Sigmoid colon (tissue), 7 donors: ENCODE measurements at regions of chr12 and their contacts with region 1.

Region 1: GRCh38 chr12:56333679-56334489 is at the start of gene PAN2:
- DNase-seq: peak; percentile 99
- H3K4me3 ChIP-seq: peak within 1 kb of the TSS; percentile 38 to 71 (median 62)
- H3K27ac ChIP-seq: peak within 1 kb of the TSS; percentile 88 to 96 (median 94)
- H3K4me1 ChIP-seq: peaks cover 0 to 22% (median 12%) of the 10 kb centered on the region in 4 donors
- H3K27me3 ChIP-seq: no peaks in the 10 kb centered on the region
- CTCF ChIP-seq: peak; percentile 40 to 55 (median 45)
- EP300 ChIP-seq: peak in 1 of 4 donors; percentile 5
- POLR2A ChIP-seq: peak; percentile 71 to 84
- total RNA-seq, gene PAN2: 26.4 to 67.0 (median 36.8) TPM

Region 2: GRCh38 chr12:56315622-56316473 is 18.0 kb before region 1 on chr12 and contains the start of gene CNPY2:
- intact Hi-C with region 1: loop called (anchors 2 kb)
- DNase-seq: peak; percentile 98
- H3K4me3 ChIP-seq: peak within 1 kb of the TSS; percentile 87 to 98 (median 90)
- H3K27ac ChIP-seq: peak within 1 kb of the TSS; percentile 93 to 95 (median 94)
- H3K4me1 ChIP-seq: peaks cover 0 to 22% (median 18%) of the 10 kb centered on the region in 4 donors
- H3K27me3 ChIP-seq: no peaks in the 10 kb centered on the region
- CTCF ChIP-seq: no peak
- EP300 ChIP-seq: no peak
- POLR2A ChIP-seq: peak; percentile 67 to 68
- total RNA-seq, gene CNPY2: 48.7 to 77.1 (median 67.9) TPM